ENCODE measurements at regions of chr12 and their contacts with region 1.

Region 1: DNA sequence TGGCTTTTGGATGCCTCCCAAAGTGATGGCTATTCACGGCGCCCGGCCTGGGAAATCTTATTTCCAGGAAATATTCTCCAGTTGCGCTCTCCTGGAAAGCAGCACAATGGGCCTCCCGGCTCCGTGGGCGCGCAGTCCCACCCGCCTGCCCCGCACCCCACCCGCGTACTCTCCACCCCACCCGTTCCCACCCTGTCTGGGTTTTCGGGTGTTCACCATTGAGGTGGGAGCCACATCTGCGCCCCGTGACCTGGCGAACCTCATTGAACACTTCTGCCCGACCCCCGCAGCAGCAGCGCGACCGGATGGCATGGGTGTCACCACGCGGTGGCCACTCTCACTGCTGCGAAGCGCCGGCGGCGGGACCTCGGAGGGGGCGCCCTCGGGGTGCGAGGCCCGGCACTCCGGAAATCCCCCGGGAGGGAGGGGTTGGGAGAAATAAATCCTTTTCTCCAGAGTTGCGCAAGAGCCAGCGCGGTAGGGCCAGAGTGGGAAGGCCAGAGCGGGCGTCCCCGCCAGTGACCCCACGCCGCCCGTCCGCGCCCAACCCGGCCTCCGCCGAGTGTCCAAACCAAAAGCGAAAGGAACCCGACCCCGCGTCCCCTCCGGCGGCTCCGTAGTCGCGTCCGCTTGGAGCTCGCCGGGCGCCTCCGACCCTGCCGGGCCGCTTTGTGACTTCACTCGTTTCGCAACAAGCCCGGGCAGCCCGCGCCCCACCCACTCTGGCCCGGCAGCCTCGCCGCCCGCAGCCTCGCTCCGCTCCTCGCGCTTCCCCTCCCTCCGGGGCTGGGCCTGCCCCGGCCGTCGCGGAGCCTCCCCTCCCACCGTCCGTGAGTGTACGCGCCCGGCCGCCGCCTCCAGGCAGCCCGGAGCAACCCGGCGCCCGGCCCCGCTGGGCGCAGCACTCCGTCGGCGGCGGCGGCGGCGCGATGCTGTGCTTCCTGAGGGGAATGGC is at the start of gene DRAM1:
- DNase-seq: peak; percentile 79
- ATAC-seq: peak; percentile 89
- H3K4me3 ChIP-seq: peak within 1 kb of the TSS; percentile 81 to 89 (median 85)
- H3K27ac ChIP-seq: peak within 1 kb of the TSS; percentile 93
- H3K4me1 ChIP-seq: peaks cover 53% of the 10 kb centered on the region
- H3K27me3 ChIP-seq: no peaks in the 10 kb centered on the region; a peak in 1 of 5 replicates
- CTCF ChIP-seq: peak; percentile 65
- EP300 ChIP-seq: no peak
- POLR2A ChIP-seq: peak; percentile 68 to 76
- RAD21 ChIP-seq: peak; percentile 10; the same call in 1 of the 2 replicates
- total RNA-seq, gene DRAM1: 18.1 and 20.9 TPM in 2 replicates

Region 2: GRCh38 chr12:101891462-101892273 is 14.5 kb after region 1 on chr12:
- CTCF ChIA-PET with region 1: no interaction called
- POLR2A ChIA-PET with region 1: interaction called, 13 read pairs
- in situ Hi-C with region 1: no loop called
- intact Hi-C with region 1: no loop called
- DNase-seq: peak; percentile 86
- ATAC-seq: peak; percentile 96
- H3K4me3 ChIP-seq: 0 out of 6 replicates have a peak overlapping the region, but pooled peaks of 1 of the 3 experiments have one; percentile 18
- H3K27ac ChIP-seq: peak overlapping the region; percentile 69
- H3K4me1 ChIP-seq: peaks cover 67% of the 10 kb centered on the region
- H3K27me3 ChIP-seq: no peaks in the 10 kb centered on the region
- CTCF ChIP-seq: no peak
- EP300 ChIP-seq: peak in 1 of 2 experiments; percentile 90; a peak in 2 of 4 replicates
- POLR2A ChIP-seq: no peak
- RAD21 ChIP-seq: no peak

Region 3: DNA sequence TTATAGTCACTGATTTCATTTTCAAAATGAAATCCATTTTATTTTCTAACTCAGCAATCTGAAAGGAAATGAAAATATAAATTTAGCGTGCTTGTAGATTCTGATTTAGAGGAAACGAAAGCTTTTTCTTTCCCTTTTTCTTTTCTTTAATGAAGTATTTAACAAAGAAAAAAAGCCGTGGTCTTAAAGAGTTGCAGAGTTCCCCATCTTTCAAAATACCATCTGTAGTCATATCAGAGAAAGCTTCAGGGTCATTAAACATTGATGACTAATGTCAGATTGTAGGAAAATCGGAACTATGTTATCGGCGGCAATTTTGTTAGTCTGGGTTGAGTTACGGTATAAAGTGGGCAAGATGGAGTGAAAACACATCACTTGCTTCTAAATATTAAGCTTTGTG is 32.5 kb after region 1 on chr12:
- CTCF ChIA-PET with region 1: no interaction called
- POLR2A ChIA-PET with region 1: no interaction called
- in situ Hi-C with region 1: no loop called
- intact Hi-C with region 1: loop called (anchors 2 kb)
- DNase-seq: no peak
- ATAC-seq: no peak
- H3K4me3 ChIP-seq: no peak overlapping the region
- H3K27ac ChIP-seq: no peak overlapping the region
- H3K4me1 ChIP-seq: peaks cover 30% of the 10 kb centered on the region
- H3K27me3 ChIP-seq: no peaks in the 10 kb centered on the region
- CTCF ChIP-seq: no peak
- EP300 ChIP-seq: no peak
- POLR2A ChIP-seq: no peak
- RAD21 ChIP-seq: no peak